Activated CD4-positive, alpha-beta T cell treated with anti-CD3 and anti-CD28 coated beads for 36 hours (primary cell): ENCODE measurements at regions of chrX and their contacts with region 1.

Region 1: GRCh38 chrX:14528629-14529289 is 577 bp upstream of the GLRA2 start:
- DNase-seq: peak; percentile 73
- ATAC-seq: peak; percentile 30
- H3K4me3 Mint-ChIP-seq: no peak overlapping the region
- H3K27ac Mint-ChIP-seq: no peak overlapping the region
- H3K4me1 Mint-ChIP-seq: no peaks in the 10 kb centered on the region
- H3K27me3 Mint-ChIP-seq: peaks cover 4% of the 10 kb centered on the region

Region 2: DNA sequence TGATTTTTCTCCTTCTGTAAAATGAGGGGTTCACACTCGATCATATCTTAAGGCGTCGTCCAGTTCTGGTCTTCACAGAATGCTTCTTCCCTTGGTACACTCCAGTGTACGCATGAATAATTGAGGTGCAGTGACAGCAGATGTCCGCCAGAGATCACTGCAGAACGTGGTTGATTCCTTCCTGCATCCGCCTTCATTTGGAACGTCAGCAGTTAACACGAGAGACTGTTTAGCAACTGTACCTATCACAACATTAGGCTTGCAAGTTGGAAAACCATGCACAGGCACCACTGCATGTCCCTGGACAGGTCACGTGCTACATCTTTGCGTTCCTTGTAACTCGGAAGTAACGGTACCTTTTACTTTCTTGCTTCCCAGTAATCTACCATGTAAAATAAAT is 433.1 kb before region 1 on chrX:
- CTCF ChIA-PET with region 1: interaction called, 3 read pairs
- POLR2A ChIA-PET with region 1: no interaction called
- intact Hi-C with region 1: loop called (anchors 1 to 2 kb)
- DNase-seq: peak; percentile 59
- ATAC-seq: peak; percentile 63
- H3K4me3 Mint-ChIP-seq: no peak overlapping the region
- H3K27ac Mint-ChIP-seq: no peak overlapping the region
- H3K4me1 Mint-ChIP-seq: no peaks in the 10 kb centered on the region
- H3K27me3 Mint-ChIP-seq: peaks cover under 1% of the 10 kb centered on the region

Region 3: GRCh38 chrX:14573146-14573545 is 44.4 kb after region 1 on chrX:
- CTCF ChIA-PET with region 1: no interaction called
- POLR2A ChIA-PET with region 1: no interaction called
- intact Hi-C with region 1: no loop called
- DNase-seq: no peak
- ATAC-seq: no peak
- H3K4me3 Mint-ChIP-seq: no peak overlapping the region
- H3K27ac Mint-ChIP-seq: no peak overlapping the region
- H3K4me1 Mint-ChIP-seq: no peaks in the 10 kb centered on the region
- H3K27me3 Mint-ChIP-seq: no peaks in the 10 kb centered on the region

Region 4: GRCh38 chrX:14712102-14712501 is 183.3 kb after region 1 on chrX:
- CTCF ChIA-PET with region 1: no interaction called
- POLR2A ChIA-PET with region 1: no interaction called
- intact Hi-C with region 1: no loop called
- DNase-seq: no peak
- ATAC-seq: no peak
- H3K4me3 Mint-ChIP-seq: no peak overlapping the region
- H3K27ac Mint-ChIP-seq: no peak overlapping the region
- H3K4me1 Mint-ChIP-seq: no peaks in the 10 kb centered on the region
- H3K27me3 Mint-ChIP-seq: no peaks in the 10 kb centered on the region